ENCODE measurements at regions of chr1 and their contacts with region 1.

Region 1: GRCh38 chr1:24744911-24745710 is at the start of gene CLIC4:
- DNase-seq: peak; percentile 100
- ATAC-seq: peak; percentile 96
- total RNA-seq, gene CLIC4: 387 TPM

Region 2: GRCh38 chr1:24724345-24725208 is 20.5 kb before region 1 on chr1:
- intact Hi-C with region 1: no loop called
- DNase-seq: no peak
- ATAC-seq: peak; percentile 79

Region 3: DNA sequence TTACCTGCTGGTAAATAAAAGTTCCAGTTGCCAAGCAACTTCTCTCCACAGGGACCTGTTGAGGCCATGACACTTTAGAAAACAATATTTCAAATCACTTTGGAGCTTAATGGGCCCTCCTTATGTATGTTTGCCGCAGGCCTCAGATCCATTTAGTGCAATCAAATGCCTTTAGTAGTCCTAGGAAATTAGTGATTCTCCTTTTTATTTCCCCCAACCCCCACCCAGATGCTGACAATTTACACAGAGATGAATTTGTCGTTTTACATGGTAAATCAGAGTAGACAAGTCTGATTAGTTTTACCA is 83.7 kb after region 1 on chr1:
- intact Hi-C with region 1: loop called (anchors 5 kb)
- DNase-seq: no peak
- ATAC-seq: no peak

Region 4: DNA sequence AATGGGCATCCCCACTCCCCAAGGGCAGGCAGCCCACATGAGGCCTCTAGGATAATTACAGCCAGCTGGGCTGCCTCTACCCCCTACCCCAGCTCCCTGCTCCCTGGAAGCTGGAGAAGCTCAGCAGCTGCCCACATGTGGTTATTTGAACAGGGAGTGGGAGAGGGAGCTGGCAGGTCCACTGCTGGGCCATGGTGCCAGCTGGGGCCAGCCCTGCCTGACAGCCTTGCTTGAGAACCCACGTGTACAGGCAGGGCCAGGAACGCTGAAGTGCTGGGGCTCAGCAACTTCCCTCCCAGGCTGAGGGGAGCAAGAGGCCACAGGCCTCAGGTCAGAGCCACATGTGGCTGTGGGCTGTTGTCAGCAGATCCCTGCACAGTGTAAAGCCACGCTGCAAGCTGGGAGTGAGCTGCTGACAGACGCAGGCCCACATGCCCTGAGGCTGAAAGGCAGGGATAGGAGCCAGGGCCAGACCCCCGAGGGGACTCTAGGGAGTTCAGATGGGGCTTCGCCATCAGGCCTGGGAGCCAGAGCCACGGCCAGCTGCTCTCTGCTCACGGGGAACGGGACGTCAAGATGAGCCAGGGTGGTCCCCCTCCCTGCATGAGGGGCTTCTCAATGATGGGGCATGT is 358.2 kb after region 1 on chr1:
- intact Hi-C with region 1: no loop called
- DNase-seq: no peak
- ATAC-seq: no peak